Endothelial cell of umbilical vein (primary cell): ENCODE measurements at regions of chr3 and their contacts with region 1.

Region 1: DNA sequence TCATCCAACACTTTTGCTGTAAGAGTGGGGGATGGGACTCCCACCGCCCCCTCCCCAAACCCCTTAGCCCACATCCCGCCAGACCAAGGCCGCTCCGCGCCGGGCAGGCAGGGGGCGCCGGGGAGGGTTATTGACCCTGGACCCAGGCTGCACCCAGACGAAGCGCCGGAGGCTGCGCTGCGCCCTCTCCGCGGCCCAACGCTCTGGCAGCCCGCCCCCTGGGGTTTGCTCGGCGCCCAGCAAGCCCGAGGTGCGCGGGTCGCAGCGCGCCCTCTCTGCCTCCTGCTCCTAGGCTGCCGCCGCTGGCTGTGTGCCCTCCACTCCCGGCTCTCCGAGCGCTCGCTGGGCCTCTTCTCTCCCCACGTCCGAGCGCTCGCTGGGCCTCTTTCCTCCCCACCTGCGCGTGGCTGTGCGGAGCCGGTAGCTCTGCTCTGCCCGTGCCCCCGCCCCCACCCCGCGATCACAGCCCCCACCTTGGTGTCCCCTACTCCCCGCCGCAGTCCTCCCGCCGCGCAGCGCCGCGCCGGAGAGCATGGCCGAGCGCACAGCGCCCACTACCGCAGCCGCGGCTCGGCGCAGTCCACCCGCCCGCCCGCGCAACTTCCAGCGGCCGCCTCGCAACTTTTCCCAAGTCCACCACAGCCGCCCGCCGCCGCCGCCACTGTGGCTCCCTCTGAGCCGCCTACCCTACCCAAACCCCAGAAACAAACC is 1.2 kb downstream of the MECOM start:
- DNase-seq: peak; percentile 84
- H3K4me3 ChIP-seq: peak overlapping the region; percentile 23 to 77 (median 64)
- H3K27ac ChIP-seq: peak overlapping the region; percentile 81
- H3K4me1 ChIP-seq: peaks cover 66% of the 10 kb centered on the region
- H3K27me3 ChIP-seq: no peaks in the 10 kb centered on the region
- CTCF ChIP-seq: peak; percentile 46 to 77
- POLR2A ChIP-seq: peak; percentile 55

Region 2: GRCh38 chr3:169133178-169134161 is 528.8 kb before region 1 on chr3:
- CTCF ChIA-PET with region 1: interaction called, 40 read pairs
- POLR2A ChIA-PET with region 1: interaction called, 3 read pairs
- dilution Hi-C with region 1: no loop called
- intact Hi-C with region 1: no loop called
- DNase-seq: peak; percentile 83
- H3K4me3 ChIP-seq: no peak overlapping the region
- H3K27ac ChIP-seq: peak overlapping the region; percentile 52
- H3K4me1 ChIP-seq: peaks cover 44% of the 10 kb centered on the region
- H3K27me3 ChIP-seq: no peaks in the 10 kb centered on the region
- CTCF ChIP-seq: peak in 1 of 2 donors; percentile 16
- POLR2A ChIP-seq: peak; percentile 17

Region 3: DNA sequence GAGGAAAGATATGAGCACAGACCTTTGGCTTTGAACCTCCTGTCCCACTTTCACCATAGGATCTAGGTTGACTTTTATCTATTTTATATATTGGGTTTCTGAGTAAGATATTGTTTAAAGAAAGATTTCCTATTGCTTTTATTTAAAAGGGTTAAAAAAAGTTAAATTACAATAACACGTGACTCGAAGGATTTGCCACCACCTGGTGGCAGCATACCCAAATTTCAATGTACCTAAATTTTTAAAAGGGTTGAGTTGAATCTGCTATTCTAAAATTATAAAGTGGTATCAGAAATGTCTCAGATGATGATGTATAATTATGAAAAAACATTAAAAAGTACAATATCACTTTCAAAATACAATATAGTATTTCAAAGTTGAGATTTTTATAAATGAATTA is 367.2 kb before region 1 on chr3:
- CTCF ChIA-PET with region 1: interaction called, 4 read pairs
- POLR2A ChIA-PET with region 1: no interaction called
- dilution Hi-C with region 1: no loop called
- intact Hi-C with region 1: loop called (anchors 1 kb)
- DNase-seq: peak; percentile 71
- H3K4me3 ChIP-seq: no peak overlapping the region
- H3K27ac ChIP-seq: no peak overlapping the region
- H3K4me1 ChIP-seq: peaks cover 7% of the 10 kb centered on the region
- H3K27me3 ChIP-seq: no peaks in the 10 kb centered on the region
- CTCF ChIP-seq: peak; percentile 29 to 32
- POLR2A ChIP-seq: no peak

Region 4: GRCh38 chr3:169454823-169455222 is 207.5 kb before region 1 on chr3:
- CTCF ChIA-PET with region 1: no interaction called
- POLR2A ChIA-PET with region 1: no interaction called
- dilution Hi-C with region 1: no loop called
- intact Hi-C with region 1: loop called (anchors 1 kb)
- DNase-seq: peak; percentile 93
- H3K4me3 ChIP-seq: no peak overlapping the region
- H3K27ac ChIP-seq: peak overlapping the region; percentile 69
- H3K4me1 ChIP-seq: peaks cover 28% of the 10 kb centered on the region
- H3K27me3 ChIP-seq: no peaks in the 10 kb centered on the region
- CTCF ChIP-seq: no peak
- POLR2A ChIP-seq: no peak

Region 5: DNA sequence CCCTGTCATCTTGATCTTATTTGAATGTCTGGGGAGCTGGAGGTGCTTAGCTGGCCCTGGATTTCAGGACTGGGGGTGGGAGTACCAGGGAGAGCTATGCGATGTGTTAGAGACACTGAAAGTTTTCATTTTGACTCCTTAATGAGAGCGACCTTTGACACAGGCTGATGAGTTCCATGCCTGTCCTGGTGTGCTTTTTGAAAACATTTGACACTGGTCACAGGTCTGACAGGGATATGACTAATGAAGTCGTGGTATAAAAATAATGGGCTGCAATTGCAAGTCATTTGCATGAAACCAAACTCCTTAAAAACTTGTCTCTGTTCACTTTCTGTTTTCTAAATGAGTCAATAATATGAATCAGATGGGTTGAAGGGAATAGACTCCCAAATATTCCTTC is 80.7 kb before region 1 on chr3:
- CTCF ChIA-PET with region 1: interaction called, 8 read pairs
- POLR2A ChIA-PET with region 1: no interaction called
- dilution Hi-C with region 1: no loop called
- intact Hi-C with region 1: loop called (anchors 2 kb)
- DNase-seq: peak; percentile 46
- H3K4me3 ChIP-seq: no peak overlapping the region
- H3K27ac ChIP-seq: peak overlapping the region; percentile 19
- H3K4me1 ChIP-seq: peaks cover 26% of the 10 kb centered on the region
- H3K27me3 ChIP-seq: no peaks in the 10 kb centered on the region
- CTCF ChIP-seq: no peak
- POLR2A ChIP-seq: no peak

Region 6: GRCh38 chr3:170154569-170155143 is 492.4 kb after region 1 on chr3:
- CTCF ChIA-PET with region 1: no interaction called
- POLR2A ChIA-PET with region 1: no interaction called
- dilution Hi-C with region 1: no loop called
- intact Hi-C with region 1: no loop called
- DNase-seq: no peak
- H3K4me3 ChIP-seq: no peak overlapping the region
- H3K27ac ChIP-seq: no peak overlapping the region
- H3K4me1 ChIP-seq: no peaks in the 10 kb centered on the region
- H3K27me3 ChIP-seq: no peaks in the 10 kb centered on the region
- CTCF ChIP-seq: no peak
- POLR2A ChIP-seq: no peak

Region 7: DNA sequence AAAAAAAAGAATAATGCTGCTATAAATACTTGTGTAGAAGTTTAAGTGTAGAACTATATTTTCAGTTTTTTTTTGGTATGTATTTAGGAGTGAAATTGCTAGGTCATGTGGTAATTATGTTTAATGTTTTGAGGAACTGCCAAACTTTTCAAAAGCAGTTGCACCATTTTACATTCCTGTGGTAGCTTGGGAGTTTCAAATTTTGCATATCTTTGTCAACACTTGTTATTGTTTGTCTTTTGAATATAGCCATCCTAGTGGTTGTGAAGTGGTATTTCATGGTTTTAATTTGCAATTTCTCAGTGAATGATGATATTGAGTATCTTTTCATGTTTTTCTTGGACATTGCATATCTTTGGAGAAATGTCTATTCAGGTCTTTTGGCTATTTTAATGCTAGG is 725.7 kb after region 1 on chr3:
- CTCF ChIA-PET with region 1: no interaction called
- POLR2A ChIA-PET with region 1: no interaction called
- dilution Hi-C with region 1: no loop called
- intact Hi-C with region 1: no loop called
- DNase-seq: no peak
- H3K4me3 ChIP-seq: no peak overlapping the region
- H3K27ac ChIP-seq: no peak overlapping the region
- H3K4me1 ChIP-seq: no peaks in the 10 kb centered on the region
- H3K27me3 ChIP-seq: no peaks in the 10 kb centered on the region
- CTCF ChIP-seq: no peak
- POLR2A ChIP-seq: no peak